ENCODE measurements at regions of chr11 and their contacts with region 1.

Region 1: DNA sequence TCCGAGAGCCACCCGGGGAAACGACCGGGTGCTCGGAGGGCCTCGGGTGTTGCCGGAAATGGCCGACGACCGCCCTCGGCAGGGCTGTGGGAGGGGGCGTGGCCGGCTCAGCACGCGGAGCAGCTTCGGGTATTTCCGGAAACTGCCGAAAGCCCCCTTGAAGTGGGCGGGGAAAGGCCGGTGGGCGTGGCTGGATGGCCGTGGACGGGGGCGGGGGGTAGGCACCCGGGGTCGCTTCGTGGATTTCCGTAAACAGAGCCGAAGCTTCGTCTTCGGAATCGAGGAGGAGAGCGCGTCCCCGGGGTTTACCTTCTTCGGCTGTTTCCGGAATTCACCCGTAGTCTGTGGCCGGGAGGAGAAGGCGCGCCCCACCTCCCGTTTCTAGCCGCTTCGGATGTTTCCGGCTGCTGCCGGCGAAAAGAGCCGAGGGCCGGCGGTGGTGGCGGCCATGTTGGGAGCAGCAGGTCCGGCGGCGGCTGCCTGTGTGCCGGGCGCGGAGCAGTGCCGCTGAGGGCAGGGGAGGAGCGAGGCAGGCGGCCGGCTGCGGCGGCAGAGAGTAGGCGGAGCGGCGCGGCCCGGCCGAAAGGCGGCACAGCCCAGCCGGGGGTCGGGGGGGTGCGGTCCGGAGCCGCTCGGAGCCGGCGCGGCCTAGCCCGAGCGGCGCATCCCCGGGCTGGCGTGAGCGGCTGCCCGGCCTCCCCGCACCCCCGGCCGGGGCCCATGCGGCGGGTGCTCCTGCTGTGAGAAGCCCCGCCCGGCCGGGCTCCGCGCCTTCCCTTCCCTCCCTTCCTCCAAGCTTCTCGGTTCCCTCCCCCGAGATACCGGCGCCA is at the start of gene MARK2:
- DNase-seq: peak; percentile 98
- CTCF ChIP-seq: no peak

Region 2: GRCh38 chr11:63663809-63664208 is 175.1 kb before region 1 on chr11:
- CTCF ChIA-PET with region 1: no interaction called
- POLR2A ChIA-PET with region 1: no interaction called
- DNase-seq: no peak
- CTCF ChIP-seq: no peak

Region 3: GRCh38 chr11:63768237-63769043 is 70.5 kb before region 1 on chr11 and contains the start of gene ZFTA:
- CTCF ChIA-PET with region 1: interaction called, 19 read pairs
- POLR2A ChIA-PET with region 1: no interaction called
- DNase-seq: peak; percentile 89
- CTCF ChIP-seq: peak; percentile 80

Region 4: GRCh38 chr11:63850920-63851319 is 12.0 kb after region 1 on chr11:
- CTCF ChIA-PET with region 1: interaction called, 17 read pairs
- POLR2A ChIA-PET with region 1: interaction called, 8 read pairs
- DNase-seq: no peak
- CTCF ChIP-seq: no peak

Region 5: DNA sequence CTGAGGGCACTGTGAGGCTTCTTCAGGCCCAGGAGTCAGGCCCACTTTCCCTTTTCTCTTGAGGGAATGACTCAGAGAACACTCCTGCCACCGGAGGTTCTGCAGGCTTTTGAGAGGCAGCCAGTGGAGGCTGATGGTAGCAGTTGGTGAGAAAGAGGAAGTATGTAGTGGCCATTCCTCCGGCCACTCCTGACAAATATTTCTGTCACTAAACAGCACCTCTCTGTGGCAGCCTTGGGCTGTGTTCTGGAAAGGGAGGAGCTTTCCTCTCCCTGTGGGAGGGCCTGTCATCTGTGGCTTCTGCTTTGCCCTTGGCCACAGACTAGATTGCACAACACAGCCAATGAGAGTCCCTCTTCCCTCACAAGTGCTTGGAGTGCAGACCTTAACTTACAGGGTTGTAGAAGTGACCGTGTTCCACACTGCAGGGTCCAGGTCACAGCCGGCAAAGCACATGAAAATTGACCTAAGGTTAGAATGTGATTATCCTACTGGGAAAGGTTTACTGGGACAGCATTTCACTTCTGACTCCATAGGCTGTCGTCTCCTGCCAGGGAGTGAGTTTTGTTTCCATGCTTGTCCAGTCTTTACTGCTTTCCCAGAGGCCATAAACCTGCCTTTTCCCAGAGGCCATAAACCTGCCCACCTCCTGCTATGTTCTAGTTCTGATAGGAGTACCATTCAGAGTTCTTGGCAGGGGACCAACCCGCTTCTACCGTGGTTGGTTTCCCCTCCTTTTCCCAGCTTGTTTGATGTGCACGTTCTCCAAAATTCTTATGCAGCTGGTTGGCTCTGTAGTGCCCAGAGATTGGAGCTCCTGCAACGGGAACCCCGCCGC is 33.3 kb after region 1 on chr11:
- CTCF ChIA-PET with region 1: interaction called, 95 read pairs
- POLR2A ChIA-PET with region 1: interaction called, 4 read pairs
- DNase-seq: peak; percentile 88
- CTCF ChIP-seq: peak; percentile 79

Region 6: DNA sequence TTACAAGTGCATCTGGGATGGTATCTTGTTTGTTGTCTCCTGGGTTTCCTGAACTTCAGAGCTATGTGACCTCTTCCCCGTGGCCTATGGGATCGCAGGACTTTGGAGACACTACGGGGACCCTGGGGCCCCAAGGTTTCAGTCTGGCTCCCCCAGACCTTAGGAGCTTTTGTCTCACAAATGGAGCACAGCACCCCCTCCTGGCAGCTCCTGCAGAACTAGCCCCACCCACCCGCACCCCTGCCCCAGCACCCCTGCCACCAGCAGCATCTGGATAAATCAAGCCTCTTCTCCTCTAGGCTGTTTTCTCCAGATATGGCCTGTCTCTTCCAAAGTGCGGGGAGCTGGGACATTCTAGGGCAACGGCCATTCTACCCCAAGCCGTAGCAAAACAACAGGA is 67.7 kb after region 1 on chr11:
- CTCF ChIA-PET with region 1: interaction called, 19 read pairs
- POLR2A ChIA-PET with region 1: no interaction called
- DNase-seq: no peak
- CTCF ChIP-seq: no peak

Region 7: GRCh38 chr11:63945477-63946163 is 106.7 kb after region 1 on chr11:
- CTCF ChIA-PET with region 1: interaction called, 129 read pairs
- POLR2A ChIA-PET with region 1: no interaction called
- DNase-seq: peak; percentile 64
- CTCF ChIP-seq: peak; percentile 76

Region 8: DNA sequence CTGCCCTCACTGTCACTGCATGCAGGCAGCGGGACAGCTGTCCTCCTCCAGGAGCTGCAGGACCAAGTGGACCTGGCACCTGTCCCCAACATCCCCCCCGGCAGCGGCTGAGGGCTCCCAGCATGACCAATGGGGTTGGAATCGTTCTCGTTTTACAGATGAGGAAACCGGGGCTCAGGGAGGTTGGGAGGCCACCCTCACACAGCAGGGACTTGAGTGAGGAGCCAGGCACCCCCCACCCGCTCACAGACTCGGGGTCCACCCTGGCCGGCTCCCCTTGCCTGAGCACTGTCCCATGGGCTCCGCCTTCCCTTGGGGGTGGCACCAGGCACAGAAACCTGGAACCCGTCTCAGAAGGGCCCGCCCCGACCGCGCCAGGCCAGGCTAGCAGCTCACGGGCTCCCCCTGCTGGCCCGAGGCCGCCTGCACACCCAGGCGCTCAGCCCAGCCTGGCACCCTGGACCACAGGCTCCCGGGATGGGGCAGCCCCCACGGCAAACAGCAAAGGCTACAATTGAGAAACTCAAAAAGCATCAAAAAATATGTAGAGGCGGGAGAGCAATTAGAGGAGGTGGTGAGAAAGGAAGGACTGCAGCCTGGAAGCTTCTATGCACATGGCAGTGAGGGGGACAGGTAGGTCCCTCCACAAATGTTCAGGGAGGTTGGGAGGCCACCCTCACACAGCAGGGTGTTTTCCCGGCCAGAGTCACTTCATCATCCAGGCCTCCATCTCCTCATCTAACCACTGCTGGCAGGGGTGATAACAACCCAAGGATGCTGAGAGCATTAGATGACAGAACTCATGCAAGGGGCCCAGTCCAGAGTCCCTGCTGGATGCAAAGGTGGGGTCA is 314.2 kb after region 1 on chr11:
- CTCF ChIA-PET with region 1: interaction called, 23 read pairs
- POLR2A ChIA-PET with region 1: no interaction called
- DNase-seq: peak; percentile 94
- CTCF ChIP-seq: peak; percentile 97

Measured in GM10248 (cell line).